Heart right ventricle (tissue), 16 donors: ENCODE measurements at regions of chr11 and their contacts with region 1.

Region 1: DNA sequence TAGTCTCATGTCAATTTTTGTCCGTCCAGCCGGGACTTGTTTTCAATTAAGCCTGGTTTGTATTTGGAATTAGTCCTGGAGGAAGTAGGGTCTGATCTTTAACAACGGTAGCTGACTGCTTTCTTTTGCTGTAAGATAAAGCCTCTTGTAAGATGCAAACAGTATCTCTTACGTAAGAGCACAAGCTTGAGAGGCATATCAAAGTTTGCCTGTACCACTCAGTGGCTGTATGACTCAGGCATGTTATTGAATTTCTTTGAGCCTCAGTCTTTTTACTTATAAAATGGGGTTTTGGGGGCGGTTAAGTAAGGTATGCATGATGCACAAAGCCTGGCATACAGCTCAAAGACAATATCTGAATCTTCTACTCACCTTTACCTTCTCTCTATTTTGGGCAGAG is 198.4 kb upstream of the NARS2 start:
- DNase-seq: no peak
- ATAC-seq: no peak
- H3K4me3 ChIP-seq: no peak overlapping the region
- H3K27ac ChIP-seq: no peak overlapping the region
- H3K4me1 ChIP-seq: peaks cover 0 to 11% (median under 1%) of the 10 kb centered on the region in 9 donors
- H3K27me3 ChIP-seq: no peaks in the 10 kb centered on the region
- CTCF ChIP-seq: no peak

Region 2: GRCh38 chr11:78731027-78731426 is 42.0 kb before region 1 on chr11:
- intact Hi-C with region 1: no loop called
- DNase-seq: no peak
- ATAC-seq: no peak
- H3K4me3 ChIP-seq: no peak overlapping the region
- H3K27ac ChIP-seq: no peak overlapping the region
- H3K4me1 ChIP-seq: peaks cover 0 to 6% (median 0%) of the 10 kb centered on the region in 9 donors
- H3K27me3 ChIP-seq: no peaks in the 10 kb centered on the region
- CTCF ChIP-seq: no peak

Region 3: DNA sequence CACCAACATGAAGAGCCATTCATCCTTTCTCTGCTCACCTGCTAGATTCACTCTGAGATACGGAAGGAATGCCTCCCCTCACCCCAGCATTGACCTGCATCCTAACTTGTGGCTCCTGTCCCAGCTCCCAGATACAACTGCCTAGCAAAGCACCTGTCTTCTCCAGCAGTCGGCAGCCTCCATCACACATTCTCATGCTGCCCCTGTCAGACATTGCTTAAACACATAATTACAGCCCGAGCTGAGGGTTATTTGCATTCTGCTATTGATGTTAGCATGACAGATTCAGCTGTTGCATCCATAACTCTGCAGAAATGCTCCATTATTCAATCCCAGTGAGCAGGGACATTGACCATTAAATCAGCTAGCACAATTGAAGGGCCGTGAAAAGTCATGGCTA is 14.0 kb before region 1 on chr11:
- intact Hi-C with region 1: loop called in 1 of 10 experiments (anchors 2 kb)
- DNase-seq: no peak
- ATAC-seq: no peak
- H3K4me3 ChIP-seq: no peak overlapping the region
- H3K27ac ChIP-seq: no peak overlapping the region
- H3K4me1 ChIP-seq: peaks cover 0 to under 1% (median 0%) of the 10 kb centered on the region in 9 donors
- H3K27me3 ChIP-seq: peaks cover 0 to 4% (median 0%) of the 10 kb centered on the region in 7 donors
- CTCF ChIP-seq: no peak